ENCODE measurements at regions of chr15 and their contacts with region 1.

Region 1: DNA sequence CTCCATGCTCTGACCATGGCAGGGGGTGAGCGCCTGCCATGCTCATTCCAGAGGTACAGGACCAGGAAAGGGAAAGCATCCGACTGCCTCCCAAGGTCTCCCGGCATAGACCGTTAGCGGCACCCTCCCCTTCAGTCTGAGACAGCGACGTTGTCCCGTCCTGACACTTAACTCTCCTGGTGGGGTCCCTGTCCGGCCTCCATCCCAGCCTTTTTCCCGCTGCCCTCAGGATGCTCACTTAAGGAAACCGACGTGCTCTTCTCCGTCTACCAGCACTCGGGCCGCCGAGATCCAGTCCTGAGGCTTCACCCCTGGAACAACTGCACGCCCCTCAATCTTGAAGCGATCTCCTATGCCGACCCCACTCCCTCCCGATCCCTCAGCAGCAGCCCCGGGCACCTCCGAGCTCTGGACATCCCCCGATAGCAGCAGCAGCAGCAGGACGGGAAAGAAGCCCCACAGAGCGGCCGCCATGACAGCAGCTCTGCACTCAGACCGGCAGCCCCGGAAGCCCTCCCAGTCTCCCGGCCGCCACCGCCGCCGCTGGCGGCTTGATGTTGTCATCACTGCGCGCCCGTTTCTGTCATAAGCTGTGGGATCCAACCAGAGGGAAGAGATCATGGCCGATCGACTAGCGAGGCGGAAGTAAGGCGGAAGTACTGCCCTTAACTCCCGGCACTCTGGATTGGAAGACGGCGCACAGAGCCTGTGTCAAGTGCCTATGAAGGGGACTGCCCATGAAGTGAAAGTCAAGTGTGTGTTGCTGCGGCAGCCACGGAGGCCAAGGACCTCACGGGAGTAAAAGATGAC is at the starts of genes EMC7 and PGBD4:
- DNase-seq: peak; percentile 99
- ATAC-seq: peak; percentile 100
- total RNA-seq, gene EMC7: 58.7 TPM
- total RNA-seq, gene PGBD4: 1.7 TPM

Region 2: GRCh38 chr15:34223904-34224596 is 122.5 kb after region 1 on chr15:
- intact Hi-C with region 1: loop called (anchors 10 kb)
- DNase-seq: no peak
- ATAC-seq: peak; percentile 33

Region 3: GRCh38 chr15:34437687-34438086 is 336.1 kb after region 1 on chr15 and contains the start of gene GOLGA8A:
- intact Hi-C with region 1: no loop called
- DNase-seq: peak; percentile 82
- ATAC-seq: peak; percentile 46
- total RNA-seq, gene GOLGA8A: 17.7 TPM